ENCODE measurements at regions of chr2 and their contacts with region 1.

Region 1: GRCh38 chr2:219206442-219207253 is at the start of gene ZFAND2B:
- DNase-seq: peak; percentile 94
- H3K4me3 Mint-ChIP-seq: peak within 1 kb of the TSS; percentile 94
- H3K27ac Mint-ChIP-seq: peak within 1 kb of the TSS; percentile 96
- H3K4me1 Mint-ChIP-seq: peaks cover 32% of the 10 kb centered on the region
- H3K27me3 Mint-ChIP-seq: no peaks in the 10 kb centered on the region
- total RNA-seq, gene ZFAND2B: 32.6 to 33.6 TPM

Region 2: DNA sequence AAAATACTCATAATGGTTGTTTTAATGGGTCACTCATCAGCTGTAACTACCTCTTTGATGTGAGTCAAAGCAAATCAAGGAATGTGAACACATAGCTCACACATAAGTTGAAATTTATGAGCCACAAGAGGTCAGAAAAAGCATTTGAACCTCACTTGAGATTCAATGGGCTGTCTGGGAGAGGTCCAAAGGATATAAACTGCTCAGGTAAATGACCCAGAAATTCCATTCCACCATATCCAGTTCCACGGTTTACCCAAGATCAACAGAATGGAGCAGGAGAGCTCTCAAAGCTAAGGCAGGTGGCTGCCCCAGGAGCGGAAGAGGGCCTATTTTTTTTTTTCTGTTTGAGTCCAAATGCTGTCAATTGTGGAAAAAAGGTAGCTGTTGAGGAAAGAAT is 1667.9 kb before region 1 on chr2:
- CTCF ChIA-PET with region 1: no interaction called
- intact Hi-C with region 1: no loop called
- DNase-seq: no peak
- H3K4me3 Mint-ChIP-seq: no peak overlapping the region
- H3K27ac Mint-ChIP-seq: no peak overlapping the region
- H3K4me1 Mint-ChIP-seq: no peaks in the 10 kb centered on the region
- H3K27me3 Mint-ChIP-seq: no peaks in the 10 kb centered on the region

Region 3: GRCh38 chr2:219160186-219161017 is 46.2 kb before region 1 on chr2 and contains the start of gene NHEJ1:
- CTCF ChIA-PET with region 1: interaction called, 11 read pairs
- intact Hi-C with region 1: loop called (anchors 1 kb)
- DNase-seq: peak; percentile 96
- H3K4me3 Mint-ChIP-seq: peak within 1 kb of the TSS; percentile 80
- H3K27ac Mint-ChIP-seq: peak within 1 kb of the TSS; percentile 88
- H3K4me1 Mint-ChIP-seq: peaks cover 13% of the 10 kb centered on the region
- H3K27me3 Mint-ChIP-seq: no peaks in the 10 kb centered on the region
- total RNA-seq, gene NHEJ1: 24.4 to 26.6 TPM

Region 4: DNA sequence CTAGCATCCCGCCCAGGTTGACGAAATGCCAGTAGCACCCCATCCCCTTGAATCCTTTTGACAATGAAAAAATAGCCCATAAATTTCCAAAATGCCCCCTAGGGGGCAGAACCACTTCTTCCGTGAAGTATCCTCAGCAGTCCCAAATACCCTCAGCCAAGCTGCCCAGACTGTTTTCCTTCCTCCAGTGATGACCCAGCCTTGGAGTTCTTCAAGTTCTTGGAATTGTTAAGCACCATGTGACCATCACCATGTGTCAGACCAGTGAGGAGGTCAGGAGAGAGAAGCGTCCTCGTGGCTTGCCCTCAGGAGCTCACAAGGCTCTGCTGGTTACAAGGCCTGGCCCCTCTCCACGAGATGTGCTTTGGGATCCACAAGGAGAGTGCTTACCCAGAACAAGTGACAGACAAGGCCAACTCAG is 35.4 kb before region 1 on chr2:
- CTCF ChIA-PET with region 1: interaction called, 16 read pairs
- intact Hi-C with region 1: loop called (anchors 1 kb)
- DNase-seq: peak; percentile 51
- H3K4me3 Mint-ChIP-seq: no peak overlapping the region
- H3K27ac Mint-ChIP-seq: no peak overlapping the region
- H3K4me1 Mint-ChIP-seq: peaks cover 25% of the 10 kb centered on the region
- H3K27me3 Mint-ChIP-seq: no peaks in the 10 kb centered on the region

Region 5: DNA sequence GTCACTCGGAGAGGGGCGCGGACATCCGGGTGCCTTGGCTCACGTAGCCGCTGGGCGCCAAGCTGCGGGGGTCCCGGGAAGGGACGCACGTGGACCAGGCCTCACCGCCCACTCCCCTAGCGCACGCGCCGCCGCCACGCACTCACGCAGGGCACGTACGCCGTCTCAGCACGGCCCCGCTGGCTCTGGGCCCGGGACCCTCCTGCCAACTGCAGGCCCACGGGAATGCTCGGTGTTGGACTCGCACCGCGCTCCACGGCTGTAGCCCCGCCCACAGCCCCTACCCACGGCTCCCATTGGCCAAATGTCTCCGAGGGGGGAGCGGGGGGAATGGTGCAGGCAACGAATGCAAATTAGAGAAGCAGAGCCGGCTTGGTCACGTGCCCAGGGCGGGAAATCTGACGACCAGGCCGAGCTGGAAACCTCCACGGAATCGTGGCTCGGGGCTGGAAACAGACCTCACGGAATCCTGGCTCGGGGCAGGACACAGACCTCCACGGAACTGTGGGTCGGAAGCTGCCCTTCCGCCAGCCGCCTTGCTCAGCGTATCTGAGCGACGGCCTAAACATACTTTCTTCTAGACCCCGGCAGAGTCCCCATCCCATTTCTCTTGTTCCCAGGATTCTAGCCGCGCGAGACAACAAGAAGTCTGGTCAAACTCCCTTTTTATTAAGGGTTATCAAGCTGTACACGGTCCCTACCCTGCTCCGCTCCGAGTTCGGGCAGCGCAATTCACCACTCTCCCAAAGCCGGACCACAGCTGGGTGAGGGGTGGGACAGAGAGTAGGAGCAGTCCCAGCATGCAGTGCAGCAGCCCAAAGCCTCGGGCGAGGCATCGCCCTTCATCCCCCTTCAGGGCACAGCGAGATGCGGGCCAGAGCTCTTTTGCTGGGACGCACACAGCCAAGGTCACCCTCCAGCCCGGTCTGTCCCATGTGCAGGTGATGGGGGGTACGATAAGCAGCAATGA is 12.4 kb after region 1 on chr2 and contains the start of gene ABCB6:
- CTCF ChIA-PET with region 1: interaction called, 3 read pairs
- intact Hi-C with region 1: loop called (anchors 1 kb)
- DNase-seq: peak; percentile 89
- H3K4me3 Mint-ChIP-seq: peak within 1 kb of the TSS; percentile 78
- H3K27ac Mint-ChIP-seq: peak within 1 kb of the TSS; percentile 56
- H3K4me1 Mint-ChIP-seq: peaks cover 25% of the 10 kb centered on the region
- H3K27me3 Mint-ChIP-seq: no peaks in the 10 kb centered on the region
- total RNA-seq, gene ABCB6: 7.0 to 7.5 TPM

Region 6: DNA sequence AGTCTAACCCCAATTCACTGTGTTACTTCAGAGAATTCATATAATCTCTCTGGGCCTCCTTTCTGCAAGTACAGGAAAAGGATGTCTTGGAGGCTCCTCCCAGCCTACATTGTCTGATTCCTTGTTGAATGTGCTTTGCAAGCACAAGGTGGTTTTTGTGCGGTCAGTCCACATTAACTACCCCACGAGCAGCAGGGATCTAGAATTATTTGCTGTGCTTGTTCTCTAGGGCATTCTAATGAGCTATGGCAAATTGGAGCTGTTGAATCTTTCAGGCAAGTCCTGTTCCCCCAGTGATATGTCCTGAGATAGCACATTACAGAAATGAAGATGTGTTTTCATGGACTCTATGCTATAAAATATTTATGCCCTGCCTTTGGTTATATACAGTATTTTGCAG is 770.2 kb after region 1 on chr2:
- CTCF ChIA-PET with region 1: no interaction called
- intact Hi-C with region 1: no loop called
- DNase-seq: no peak
- H3K4me3 Mint-ChIP-seq: no peak overlapping the region
- H3K27ac Mint-ChIP-seq: no peak overlapping the region
- H3K4me1 Mint-ChIP-seq: no peaks in the 10 kb centered on the region
- H3K27me3 Mint-ChIP-seq: peaks cover 5% of the 10 kb centered on the region

Measured in activated naive CD4-positive, alpha-beta T cell treated with anti-CD3 and anti-CD28 coated beads for 36 hours (primary cell).